ENCODE measurements at regions of chr4 and their contacts with region 1.

Region 1: GRCh38 chr4:149823770-149824221 is 8.2 kb upstream of the IQCM start:
- DNase-seq: peak; percentile 86
- H3K4me3 ChIP-seq: no peak overlapping the region
- H3K27ac ChIP-seq: peak overlapping the region; percentile 65
- H3K4me1 ChIP-seq: peaks cover 2% of the 10 kb centered on the region
- H3K27me3 ChIP-seq: no peaks in the 10 kb centered on the region
- CTCF ChIP-seq: no peak
- POLR2A ChIP-seq: no peak

Region 2: GRCh38 chr4:149676076-149676475 is 147.7 kb before region 1 on chr4:
- CTCF ChIA-PET with region 1: no interaction called
- POLR2A ChIA-PET with region 1: no interaction called
- dilution Hi-C with region 1: no loop called
- intact Hi-C with region 1: no loop called
- DNase-seq: peak; percentile 6
- H3K4me3 ChIP-seq: no peak overlapping the region
- H3K27ac ChIP-seq: no peak overlapping the region
- H3K4me1 ChIP-seq: no peaks in the 10 kb centered on the region
- H3K27me3 ChIP-seq: no peaks in the 10 kb centered on the region
- CTCF ChIP-seq: no peak
- POLR2A ChIP-seq: no peak

Region 3: GRCh38 chr4:149708513-149709175 is 115.2 kb before region 1 on chr4:
- CTCF ChIA-PET with region 1: no interaction called
- POLR2A ChIA-PET with region 1: no interaction called
- dilution Hi-C with region 1: no loop called
- intact Hi-C with region 1: loop called (anchors 1 kb)
- DNase-seq: peak; percentile 86
- H3K4me3 ChIP-seq: no peak overlapping the region
- H3K27ac ChIP-seq: no peak overlapping the region
- H3K4me1 ChIP-seq: peaks cover 7% of the 10 kb centered on the region
- H3K27me3 ChIP-seq: no peaks in the 10 kb centered on the region
- CTCF ChIP-seq: no peak
- POLR2A ChIP-seq: no peak